H1 (cell line): ENCODE measurements at regions of chr6 and their contacts with region 1.

Region 1: DNA sequence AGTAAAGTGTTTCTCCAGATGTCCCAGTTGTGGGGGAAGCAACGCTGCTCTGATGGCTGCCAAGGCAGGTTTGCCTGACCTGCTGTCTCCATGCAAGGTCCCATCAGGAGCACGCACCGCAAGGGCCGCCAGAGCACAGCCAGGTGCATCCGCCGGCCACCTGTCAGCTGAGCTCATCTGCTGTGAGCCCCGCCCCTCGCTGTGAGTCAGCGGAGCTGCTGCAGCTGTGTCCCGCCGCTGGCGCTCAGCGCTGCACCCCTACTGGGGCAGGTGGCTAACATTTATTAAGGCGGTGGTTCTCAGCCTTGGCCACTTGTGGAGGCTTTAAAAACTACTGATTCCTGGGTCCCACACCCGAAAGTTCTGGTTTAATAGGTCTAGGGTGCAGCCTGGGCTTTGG is 225.7 kb downstream of the UST start:
- DNase-seq: peak; percentile 84 to 88
- H3K4me3 ChIP-seq: peak overlapping the region in 1 of 4 experiments; percentile 19; a peak in 3 of 8 replicates
- H3K27ac ChIP-seq: peak overlapping the region; percentile 54; the same call in 1 of the 2 replicates
- H3K4me1 ChIP-seq: peaks cover 12 to 40% (median 15%) of the 10 kb centered on the region in 4 experiments
- H3K27me3 ChIP-seq: no peaks in the 10 kb centered on the region
- CTCF ChIP-seq: peak in 2 of 3 experiments; percentile 14 to 22; a peak in 2 of 4 replicates
- EP300 ChIP-seq: no peak
- POLR2A ChIP-seq: peak in 1 of 2 experiments; percentile 61; a peak in 1 of 3 replicates
- RAD21 ChIP-seq: peak; percentile 22 to 28; a peak in 2 of 4 replicates

Region 2: GRCh38 chr6:148831064-148831463 is 141.4 kb before region 1 on chr6:
- CTCF ChIA-PET with region 1: no interaction called
- POLR2A ChIA-PET with region 1: no interaction called
- DNase-seq: no peak
- H3K4me3 ChIP-seq: no peak overlapping the region
- H3K27ac ChIP-seq: no peak overlapping the region
- H3K4me1 ChIP-seq: peaks cover 0 to 4% (median 2%) of the 10 kb centered on the region in 4 experiments; a peak in 4 of 7 replicates
- H3K27me3 ChIP-seq: no peaks in the 10 kb centered on the region
- CTCF ChIP-seq: no peak
- EP300 ChIP-seq: no peak
- POLR2A ChIP-seq: no peak
- RAD21 ChIP-seq: no peak

Region 3: DNA sequence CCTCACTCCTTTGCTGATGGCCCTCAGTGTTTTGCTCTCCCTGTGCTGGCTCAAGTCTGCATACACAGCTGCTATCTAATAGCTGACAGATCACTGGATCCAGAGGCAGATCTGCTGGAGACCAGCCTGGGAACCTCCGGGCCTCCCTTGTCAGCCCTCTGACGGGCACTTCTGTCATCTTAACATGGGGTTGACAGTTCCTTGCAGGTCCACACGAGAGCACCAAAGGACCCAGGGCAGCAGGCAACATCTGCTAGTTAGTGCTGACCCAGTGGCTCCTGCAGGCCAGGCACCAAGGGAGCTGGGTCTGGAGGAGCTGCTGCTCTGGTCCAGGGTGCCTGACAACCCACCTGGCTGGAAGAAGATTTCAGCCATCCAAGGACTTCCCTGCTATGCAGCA is 17.5 kb before region 1 on chr6:
- CTCF ChIA-PET with region 1: interaction called, 10 read pairs
- POLR2A ChIA-PET with region 1: interaction called, 3 read pairs
- DNase-seq: no peak
- H3K4me3 ChIP-seq: no peak overlapping the region
- H3K27ac ChIP-seq: no peak overlapping the region
- H3K4me1 ChIP-seq: peaks cover 0 to 5% (median 2%) of the 10 kb centered on the region in 4 experiments; a peak in 5 of 7 replicates
- H3K27me3 ChIP-seq: no peaks in the 10 kb centered on the region
- CTCF ChIP-seq: no peak
- EP300 ChIP-seq: no peak
- POLR2A ChIP-seq: no peak
- RAD21 ChIP-seq: peak in 1 of 2 experiments; percentile 32; a peak in 1 of 4 replicates

Region 4: DNA sequence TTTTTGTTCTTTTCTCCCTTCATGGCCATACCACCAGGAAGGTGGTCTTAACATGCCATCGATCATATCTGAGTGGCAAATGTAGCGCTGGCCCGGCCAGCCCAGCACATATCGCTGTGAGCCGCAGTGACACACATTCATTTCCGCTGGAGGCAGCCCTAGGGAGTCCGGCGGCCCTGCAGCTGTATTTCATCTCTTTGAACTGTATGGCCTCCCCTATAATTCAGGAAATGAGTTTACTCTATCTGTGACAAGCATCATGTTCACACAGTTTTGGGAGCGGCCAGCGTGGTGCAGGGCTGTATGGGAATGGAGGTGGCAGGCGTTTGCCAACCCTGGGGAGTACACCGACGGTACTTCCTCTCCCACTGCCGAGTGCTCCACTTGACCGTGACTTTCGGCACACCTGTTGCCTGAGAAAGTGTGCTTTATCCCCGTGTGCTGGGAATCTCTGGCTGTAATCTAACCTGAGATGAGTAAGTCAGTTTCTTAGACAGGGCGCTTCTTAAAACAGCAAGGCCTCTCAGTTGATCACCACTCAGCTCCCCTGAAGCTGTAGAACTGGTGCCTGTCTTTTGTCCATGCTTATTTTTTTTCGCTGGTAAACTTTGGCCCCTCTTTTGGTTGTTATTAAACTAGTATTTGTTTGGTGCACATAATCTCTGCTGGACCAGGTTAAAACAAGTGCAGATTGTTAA is 88.0 kb after region 1 on chr6:
- CTCF ChIA-PET with region 1: no interaction called
- POLR2A ChIA-PET with region 1: no interaction called
- DNase-seq: no peak
- H3K4me3 ChIP-seq: no peak overlapping the region
- H3K27ac ChIP-seq: no peak overlapping the region
- H3K4me1 ChIP-seq: peaks cover 0 to 2% (median 0%) of the 10 kb centered on the region in 4 experiments; a peak in 1 of 7 replicates
- H3K27me3 ChIP-seq: no peaks in the 10 kb centered on the region
- CTCF ChIP-seq: no peak
- EP300 ChIP-seq: no peak
- POLR2A ChIP-seq: no peak
- RAD21 ChIP-seq: no peak